ENCODE measurements at regions of chr19 and their contacts with region 1.

Region 1: GRCh38 chr19:2096480-2097329 is at the start of gene IZUMO4:
- DNase-seq: peak; percentile 97 to 98
- H3K4me3 ChIP-seq: peak within 1 kb of the TSS; percentile 69
- H3K4me3 Mint-ChIP-seq: peak within 1 kb of the TSS; percentile 82
- H3K27ac Mint-ChIP-seq: peak within 1 kb of the TSS; percentile 88
- H3K4me1 ChIP-seq: peaks cover 8% of the 10 kb centered on the region
- H3K4me1 Mint-ChIP-seq: no peaks in the 10 kb centered on the region
- H3K27me3 ChIP-seq: no peaks in the 10 kb centered on the region
- H3K27me3 Mint-ChIP-seq: no peaks in the 10 kb centered on the region
- CTCF ChIP-seq: peak in 1 of 2 experiments; percentile 28
- total RNA-seq, gene IZUMO4: 1.1 and 1.6 TPM in 2 replicates

Region 2: DNA sequence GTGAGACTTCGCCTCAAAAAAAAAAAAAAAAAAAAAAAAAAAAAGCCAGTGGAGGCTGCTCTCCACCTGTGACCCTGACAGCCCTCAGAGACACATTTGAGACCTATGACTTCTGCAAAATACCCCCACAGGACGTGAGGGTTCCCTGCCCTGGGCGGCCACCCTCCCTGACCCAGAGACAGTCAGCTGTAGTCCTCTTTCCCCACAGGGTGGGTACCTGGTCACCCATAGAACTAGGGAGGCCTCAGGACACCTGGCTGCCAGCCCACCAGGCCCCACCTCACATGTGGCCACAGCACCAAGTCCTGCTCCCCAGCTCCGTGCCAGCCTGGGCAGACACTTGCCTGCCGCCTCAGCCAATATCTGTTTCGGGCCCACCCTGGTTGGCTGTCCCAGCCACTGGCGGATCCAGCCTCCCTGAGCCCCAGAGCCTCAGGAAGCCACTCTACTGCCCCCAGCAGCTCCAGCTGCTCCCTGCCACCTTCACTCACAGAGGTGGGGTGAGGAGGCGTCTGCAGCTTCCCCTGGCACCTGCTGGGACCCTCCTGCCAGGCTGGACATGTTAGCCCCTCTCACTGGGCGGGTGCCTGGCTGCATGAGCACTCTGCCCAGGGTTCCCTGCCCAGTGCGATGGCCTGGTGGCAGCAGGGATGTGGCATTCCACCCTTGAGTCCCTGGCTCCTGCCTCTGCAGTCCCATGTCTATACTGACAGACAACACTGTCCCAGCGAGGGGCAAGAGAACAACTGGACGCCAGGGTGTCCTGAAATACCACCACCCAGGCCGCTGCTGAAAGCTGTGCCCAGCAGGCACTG is 52.5 kb before region 1 on chr19:
- CTCF ChIA-PET with region 1: interaction called, 10 read pairs
- POLR2A ChIA-PET with region 1: no interaction called
- intact Hi-C with region 1: no loop called
- DNase-seq: no peak
- H3K4me3 ChIP-seq: no peak overlapping the region
- H3K4me3 Mint-ChIP-seq: no peak overlapping the region
- H3K27ac Mint-ChIP-seq: no peak overlapping the region
- H3K4me1 ChIP-seq: peaks cover 7% of the 10 kb centered on the region; the same call in 1 of the 2 replicates
- H3K4me1 Mint-ChIP-seq: no peaks in the 10 kb centered on the region
- H3K27me3 ChIP-seq: no peaks in the 10 kb centered on the region
- H3K27me3 Mint-ChIP-seq: no peaks in the 10 kb centered on the region
- CTCF ChIP-seq: no peak

Region 3: GRCh38 chr19:2061495-2062381 is 35.0 kb before region 1 on chr19:
- CTCF ChIA-PET with region 1: interaction called, 4 read pairs
- POLR2A ChIA-PET with region 1: interaction called, 3 read pairs
- intact Hi-C with region 1: loop called (anchors 5 kb)
- DNase-seq: peak; percentile 98 to 99
- H3K4me3 ChIP-seq: peak overlapping the region; percentile 85
- H3K4me3 Mint-ChIP-seq: peak overlapping the region; percentile 82
- H3K27ac Mint-ChIP-seq: peak overlapping the region; percentile 86
- H3K4me1 ChIP-seq: peaks cover 24% of the 10 kb centered on the region
- H3K4me1 Mint-ChIP-seq: no peaks in the 10 kb centered on the region
- H3K27me3 ChIP-seq: no peaks in the 10 kb centered on the region
- H3K27me3 Mint-ChIP-seq: no peaks in the 10 kb centered on the region
- CTCF ChIP-seq: no peak

Region 4: GRCh38 chr19:2072757-2073551 is 23.8 kb before region 1 on chr19:
- CTCF ChIA-PET with region 1: no interaction called
- POLR2A ChIA-PET with region 1: no interaction called
- intact Hi-C with region 1: no loop called
- DNase-seq: no peak
- H3K4me3 ChIP-seq: no peak overlapping the region
- H3K4me3 Mint-ChIP-seq: no peak overlapping the region
- H3K27ac Mint-ChIP-seq: no peak overlapping the region
- H3K4me1 ChIP-seq: no peaks in the 10 kb centered on the region
- H3K4me1 Mint-ChIP-seq: no peaks in the 10 kb centered on the region
- H3K27me3 ChIP-seq: no peaks in the 10 kb centered on the region
- H3K27me3 Mint-ChIP-seq: no peaks in the 10 kb centered on the region
- CTCF ChIP-seq: no peak

Region 5: GRCh38 chr19:2151339-2152229 is 54.9 kb after region 1 on chr19 and contains the start of gene AP3D1:
- CTCF ChIA-PET with region 1: no interaction called
- POLR2A ChIA-PET with region 1: no interaction called
- intact Hi-C with region 1: loop called (anchors 2 kb)
- DNase-seq: peak; percentile 99
- H3K4me3 ChIP-seq: peak within 1 kb of the TSS; percentile 83
- H3K4me3 Mint-ChIP-seq: peak within 1 kb of the TSS; percentile 78
- H3K27ac Mint-ChIP-seq: peak within 1 kb of the TSS; percentile 79
- H3K4me1 ChIP-seq: peaks cover 24% of the 10 kb centered on the region
- H3K4me1 Mint-ChIP-seq: peaks cover 7% of the 10 kb centered on the region
- H3K27me3 ChIP-seq: no peaks in the 10 kb centered on the region
- H3K27me3 Mint-ChIP-seq: no peaks in the 10 kb centered on the region
- CTCF ChIP-seq: no peak
- total RNA-seq, gene AP3D1: 150 and 151 TPM in 2 replicates

Measured in Caco-2 (cell line).